CD8-positive, alpha-beta T cell (primary cell): ENCODE measurements at regions of chr12 and their contacts with region 1.

Region 1: GRCh38 chr12:121626087-121626852 is at the start of gene ORAI1:
- DNase-seq: peak; percentile 91 to 98 (median 96)
- ATAC-seq: peak; percentile 67
- H3K4me3 ChIP-seq: peak within 1 kb of the TSS; percentile 69 to 70
- H3K4me3 Mint-ChIP-seq: peak within 1 kb of the TSS; percentile 94
- H3K27ac ChIP-seq: peak within 1 kb of the TSS; percentile 73 to 89
- H3K27ac Mint-ChIP-seq: peak within 1 kb of the TSS; percentile 97
- H3K4me1 ChIP-seq: peaks cover 44% of the 10 kb centered on the region
- H3K4me1 Mint-ChIP-seq: peaks cover 46% of the 10 kb centered on the region
- H3K27me3 ChIP-seq: no peaks in the 10 kb centered on the region
- H3K27me3 Mint-ChIP-seq: no peaks in the 10 kb centered on the region
- CTCF ChIP-seq: no peak
- total RNA-seq, gene ORAI1: 59.0 to 62.1 TPM

Region 2: GRCh38 chr12:121494093-121494787 is 132.0 kb before region 1 on chr12:
- CTCF ChIA-PET with region 1: interaction called, 7 read pairs
- POLR2A ChIA-PET with region 1: no interaction called
- intact Hi-C with region 1: loop called in 1 of 2 experiments (anchors 1 kb)
- DNase-seq: peak; percentile 31 to 76 (median 67)
- ATAC-seq: peak; percentile 67
- H3K4me3 ChIP-seq: no peak overlapping the region
- H3K4me3 Mint-ChIP-seq: no peak overlapping the region
- H3K27ac ChIP-seq: no peak overlapping the region
- H3K27ac Mint-ChIP-seq: peak overlapping the region; percentile 27
- H3K4me1 ChIP-seq: peaks cover 16% of the 10 kb centered on the region
- H3K4me1 Mint-ChIP-seq: peaks cover 21% of the 10 kb centered on the region
- H3K27me3 ChIP-seq: no peaks in the 10 kb centered on the region
- H3K27me3 Mint-ChIP-seq: no peaks in the 10 kb centered on the region
- CTCF ChIP-seq: peak; percentile 87

Region 3: GRCh38 chr12:121550974-121551634 is 75.2 kb before region 1 on chr12:
- CTCF ChIA-PET with region 1: interaction called, 111 read pairs
- POLR2A ChIA-PET with region 1: interaction called, 5 read pairs
- intact Hi-C with region 1: loop called (anchors 1 kb)
- DNase-seq: no peak
- ATAC-seq: no peak
- H3K4me3 ChIP-seq: no peak overlapping the region
- H3K4me3 Mint-ChIP-seq: no peak overlapping the region
- H3K27ac ChIP-seq: peak overlapping the region in 1 of 2 experiments; percentile 71
- H3K27ac Mint-ChIP-seq: peak overlapping the region; percentile 85
- H3K4me1 ChIP-seq: no peaks in the 10 kb centered on the region
- H3K4me1 Mint-ChIP-seq: peaks cover 6% of the 10 kb centered on the region
- H3K27me3 ChIP-seq: no peaks in the 10 kb centered on the region
- H3K27me3 Mint-ChIP-seq: no peaks in the 10 kb centered on the region
- CTCF ChIP-seq: no peak

Region 4: DNA sequence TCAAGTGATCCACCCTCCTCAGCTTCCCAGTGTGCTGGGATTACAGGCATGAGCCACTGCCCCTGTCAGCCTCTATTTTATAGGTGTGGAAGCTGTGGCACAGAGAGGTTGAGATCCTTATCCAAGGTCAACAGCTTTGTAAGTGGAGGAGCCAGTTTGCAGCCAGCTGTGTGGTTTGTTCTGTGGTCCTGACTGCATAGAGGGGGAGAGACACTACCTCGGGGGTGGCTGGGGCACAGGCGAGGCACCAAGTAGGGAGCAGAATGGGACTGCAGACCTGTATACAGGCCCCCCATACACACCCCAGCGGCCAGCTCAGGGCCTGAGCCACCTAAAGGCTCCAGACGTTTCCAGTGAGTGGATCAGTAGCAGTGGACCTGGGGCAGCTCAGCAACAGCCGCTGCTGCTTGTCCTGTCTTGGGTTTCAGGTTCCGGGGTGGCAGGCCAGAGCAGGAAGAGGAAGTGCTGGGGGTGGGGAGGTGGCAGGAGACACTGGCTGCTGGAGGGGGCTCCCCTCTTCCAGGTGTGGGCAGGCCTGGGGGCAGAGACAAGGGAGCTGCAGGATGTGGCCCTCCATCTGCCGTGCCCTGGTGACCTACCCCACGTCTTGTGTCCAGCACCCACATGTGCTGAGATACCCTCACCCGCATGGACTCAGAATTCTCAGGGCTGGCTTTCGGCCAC is 11.1 kb after region 1 on chr12:
- CTCF ChIA-PET with region 1: interaction called, 26 read pairs
- POLR2A ChIA-PET with region 1: interaction called, 30 read pairs
- intact Hi-C with region 1: no loop called
- DNase-seq: peak in 8 of 9 experiments; percentile 47 to 83 (median 66)
- ATAC-seq: peak; percentile 77
- H3K4me3 ChIP-seq: peak overlapping the region; percentile 27 to 53
- H3K4me3 Mint-ChIP-seq: peak overlapping the region; percentile 62
- H3K27ac ChIP-seq: peak overlapping the region; percentile 62 to 71
- H3K27ac Mint-ChIP-seq: peak overlapping the region; percentile 84
- H3K4me1 ChIP-seq: peaks cover 53% of the 10 kb centered on the region
- H3K4me1 Mint-ChIP-seq: peaks cover 63% of the 10 kb centered on the region
- H3K27me3 ChIP-seq: no peaks in the 10 kb centered on the region
- H3K27me3 Mint-ChIP-seq: no peaks in the 10 kb centered on the region
- CTCF ChIP-seq: no peak

Region 5: GRCh38 chr12:121668750-121669520 is 42.7 kb after region 1 on chr12:
- CTCF ChIA-PET with region 1: interaction called, 159 read pairs
- POLR2A ChIA-PET with region 1: interaction called, 61 read pairs
- intact Hi-C with region 1: loop called (anchors 1 kb)
- DNase-seq: peak in 8 of 9 experiments; percentile 45 to 77 (median 72)
- ATAC-seq: no peak
- H3K4me3 ChIP-seq: no peak overlapping the region
- H3K4me3 Mint-ChIP-seq: peak overlapping the region; percentile 37
- H3K27ac ChIP-seq: peak overlapping the region in 1 of 2 experiments; percentile 0
- H3K27ac Mint-ChIP-seq: peak overlapping the region; percentile 88
- H3K4me1 ChIP-seq: peaks cover 60% of the 10 kb centered on the region
- H3K4me1 Mint-ChIP-seq: peaks cover 61% of the 10 kb centered on the region
- H3K27me3 ChIP-seq: no peaks in the 10 kb centered on the region
- H3K27me3 Mint-ChIP-seq: no peaks in the 10 kb centered on the region
- CTCF ChIP-seq: peak; percentile 75

Region 6: DNA sequence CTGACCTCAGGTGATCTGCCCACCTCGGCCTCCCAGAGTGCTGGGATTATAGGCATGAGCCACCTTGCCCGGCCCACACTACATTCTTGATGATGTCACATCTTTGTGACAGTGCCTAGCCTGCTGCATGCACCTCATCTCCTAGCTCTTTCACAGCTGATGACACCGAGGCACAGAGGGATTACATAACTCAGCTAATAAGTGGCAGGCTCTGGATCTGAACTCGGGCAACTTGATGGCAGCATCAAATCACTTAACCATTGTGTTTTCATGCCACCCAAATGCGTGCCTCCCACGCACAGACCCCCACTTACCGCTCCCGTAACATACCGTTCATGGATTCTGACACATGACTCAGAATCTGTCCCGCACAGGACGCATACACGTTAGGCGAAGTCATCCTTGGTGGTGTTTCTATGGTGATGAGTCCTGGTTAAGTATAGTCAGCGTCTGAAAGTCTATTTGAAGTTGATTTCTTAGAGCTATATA is 93.7 kb after region 1 on chr12:
- CTCF ChIA-PET with region 1: no interaction called
- POLR2A ChIA-PET with region 1: no interaction called
- intact Hi-C with region 1: no loop called
- DNase-seq: no peak
- ATAC-seq: no peak
- H3K4me3 ChIP-seq: no peak overlapping the region
- H3K4me3 Mint-ChIP-seq: no peak overlapping the region
- H3K27ac ChIP-seq: no peak overlapping the region
- H3K27ac Mint-ChIP-seq: no peak overlapping the region
- H3K4me1 ChIP-seq: no peaks in the 10 kb centered on the region
- H3K4me1 Mint-ChIP-seq: peaks cover 10% of the 10 kb centered on the region
- H3K27me3 ChIP-seq: no peaks in the 10 kb centered on the region
- H3K27me3 Mint-ChIP-seq: no peaks in the 10 kb centered on the region
- CTCF ChIP-seq: no peak

Region 7: GRCh38 chr12:121802846-121803630 is 176.8 kb after region 1 on chr12:
- CTCF ChIA-PET with region 1: interaction called, 3 read pairs
- POLR2A ChIA-PET with region 1: interaction called, 13 read pairs
- intact Hi-C with region 1: loop called in 1 of 2 experiments (anchors 5 kb)
- DNase-seq: peak; percentile 79 to 95 (median 88)
- ATAC-seq: peak; percentile 43
- H3K4me3 ChIP-seq: peak overlapping the region; percentile 73 to 82
- H3K4me3 Mint-ChIP-seq: peak overlapping the region; percentile 94
- H3K27ac ChIP-seq: peak overlapping the region; percentile 94 to 98
- H3K27ac Mint-ChIP-seq: peak overlapping the region; percentile 99
- H3K4me1 ChIP-seq: peaks cover 34% of the 10 kb centered on the region
- H3K4me1 Mint-ChIP-seq: peaks cover 28% of the 10 kb centered on the region
- H3K27me3 ChIP-seq: no peaks in the 10 kb centered on the region
- H3K27me3 Mint-ChIP-seq: no peaks in the 10 kb centered on the region
- CTCF ChIP-seq: no peak